ENCODE measurements at regions of chr16 and their contacts with region 1.

Region 1: GRCh38 chr16:2874912-2875362 is 8.1 kb upstream of the FLYWCH2 start:
- DNase-seq: peak; percentile 67
- ATAC-seq: peak; percentile 97
- H3K4me3 ChIP-seq: peak overlapping the region; percentile 27 to 47
- H3K27ac ChIP-seq: peak overlapping the region; percentile 41; the same call in 1 of the 2 replicates
- H3K4me1 ChIP-seq: peaks cover 19 to 34% of the 10 kb centered on the region in 2 experiments
- H3K27me3 ChIP-seq: no peaks in the 10 kb centered on the region
- CTCF ChIP-seq: peak; percentile 89 to 96 (median 96)
- POLR2A ChIP-seq: no peak
- RAD21 ChIP-seq: peak; percentile 83

Region 2: GRCh38 chr16:2734844-2735515 is 140.0 kb before region 1 on chr16:
- CTCF ChIA-PET with region 1: no interaction called
- POLR2A ChIA-PET with region 1: no interaction called
- RAD21 ChIA-PET with region 1: no interaction called
- intact Hi-C with region 1: no loop called
- DNase-seq: no peak
- ATAC-seq: no peak
- H3K4me3 ChIP-seq: no peak overlapping the region
- H3K27ac ChIP-seq: no peak overlapping the region
- H3K4me1 ChIP-seq: peaks cover 0 to 10% of the 10 kb centered on the region in 2 experiments; a peak in 2 of 4 replicates
- H3K27me3 ChIP-seq: no peaks in the 10 kb centered on the region
- CTCF ChIP-seq: no peak
- POLR2A ChIP-seq: no peak
- RAD21 ChIP-seq: no peak

Region 3: DNA sequence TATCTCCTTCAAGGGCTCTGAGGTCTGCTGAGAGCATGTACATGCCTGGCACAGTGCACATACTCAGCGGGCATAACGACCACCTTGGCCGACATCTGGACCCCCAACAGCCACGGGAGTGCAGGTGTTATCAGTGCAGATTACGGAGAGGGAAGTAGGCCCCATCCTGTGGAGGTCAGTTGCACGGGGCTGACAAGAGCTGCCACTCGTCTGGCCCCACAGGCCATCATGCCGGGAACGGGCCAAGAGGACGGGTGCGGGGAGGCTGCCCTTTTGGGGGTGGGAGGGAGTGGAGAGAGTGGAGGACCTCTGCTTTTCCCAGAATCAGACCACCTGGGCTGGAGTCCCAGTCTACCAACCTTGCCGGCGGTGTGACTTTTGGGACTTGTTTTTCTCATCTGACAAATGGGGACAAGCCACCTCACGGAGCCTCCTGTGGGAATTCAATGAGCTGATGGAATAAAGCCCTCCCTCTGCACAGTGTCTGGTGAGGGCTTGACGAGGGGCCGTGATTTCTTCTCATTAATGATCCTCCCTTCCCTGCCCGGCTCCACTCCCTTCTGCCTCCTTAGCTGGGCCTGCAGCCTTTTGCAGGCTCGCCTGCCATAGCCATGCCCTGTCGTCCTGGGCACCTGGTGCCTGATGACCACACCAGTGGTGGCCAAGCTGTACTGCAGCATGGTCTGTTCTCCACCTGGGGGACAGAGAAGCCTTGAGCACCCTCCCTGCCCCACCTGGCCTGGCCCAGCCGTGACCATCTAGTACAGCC is 92.2 kb before region 1 on chr16:
- CTCF ChIA-PET with region 1: no interaction called
- POLR2A ChIA-PET with region 1: no interaction called
- RAD21 ChIA-PET with region 1: interaction called in 1 of 2 experiments, 10 read pairs
- intact Hi-C with region 1: no loop called
- DNase-seq: no peak
- ATAC-seq: peak; percentile 49; the same call in 1 of the 2 replicates
- H3K4me3 ChIP-seq: no peak overlapping the region
- H3K27ac ChIP-seq: no peak overlapping the region
- H3K4me1 ChIP-seq: peaks cover 10 to 21% of the 10 kb centered on the region in 2 experiments
- H3K27me3 ChIP-seq: no peaks in the 10 kb centered on the region
- CTCF ChIP-seq: peak in 2 of 3 experiments; percentile 15; a peak in 2 of 6 replicates
- POLR2A ChIP-seq: no peak
- RAD21 ChIP-seq: no peak

Region 4: GRCh38 chr16:2919511-2920255 is 44.7 kb after region 1 on chr16:
- CTCF ChIA-PET with region 1: no interaction called
- POLR2A ChIA-PET with region 1: no interaction called
- RAD21 ChIA-PET with region 1: no interaction called
- intact Hi-C with region 1: loop called (anchors 1 kb)
- DNase-seq: peak; percentile 57
- ATAC-seq: peak; percentile 54
- H3K4me3 ChIP-seq: no peak overlapping the region
- H3K27ac ChIP-seq: no peak overlapping the region
- H3K4me1 ChIP-seq: peaks cover 28 to 38% of the 10 kb centered on the region in 2 experiments
- H3K27me3 ChIP-seq: no peaks in the 10 kb centered on the region
- CTCF ChIP-seq: peak; percentile 75 to 94 (median 79)
- POLR2A ChIP-seq: no peak
- RAD21 ChIP-seq: peak; percentile 87

Region 5: GRCh38 chr16:2926650-2927646 is 52.0 kb after region 1 on chr16:
- CTCF ChIA-PET with region 1: interaction called, 14 read pairs
- POLR2A ChIA-PET with region 1: no interaction called
- RAD21 ChIA-PET with region 1: interaction called in 1 of 2 experiments, 3 read pairs
- intact Hi-C with region 1: no loop called
- DNase-seq: peak; percentile 85
- ATAC-seq: peak; percentile 96
- H3K4me3 ChIP-seq: no peak overlapping the region
- H3K27ac ChIP-seq: no peak overlapping the region
- H3K4me1 ChIP-seq: peaks cover 0 to 11% of the 10 kb centered on the region in 2 experiments; a peak in 3 of 4 replicates
- H3K27me3 ChIP-seq: no peaks in the 10 kb centered on the region
- CTCF ChIP-seq: peak; percentile 93 to 98 (median 97)
- POLR2A ChIP-seq: no peak
- RAD21 ChIP-seq: peak; percentile 87

Measured in HCT116 (cell line).